T-cell (primary cell): ENCODE measurements at regions of chr5 and their contacts with region 1.

Region 1: GRCh38 chr5:67085616-67086015 is 111.0 kb downstream of the CD180 start:
- DNase-seq: no peak
- ATAC-seq: no peak
- H3K4me3 ChIP-seq: no peak overlapping the region
- H3K4me3 Mint-ChIP-seq: no peak overlapping the region
- H3K27ac ChIP-seq: no peak overlapping the region
- H3K27ac Mint-ChIP-seq: no peak overlapping the region
- H3K4me1 ChIP-seq: no peaks in the 10 kb centered on the region
- H3K4me1 Mint-ChIP-seq: peaks cover 0 to 6% (median 5%) of the 10 kb centered on the region in 3 donors
- H3K27me3 ChIP-seq: no peaks in the 10 kb centered on the region
- H3K27me3 Mint-ChIP-seq: no peaks in the 10 kb centered on the region

Region 2: DNA sequence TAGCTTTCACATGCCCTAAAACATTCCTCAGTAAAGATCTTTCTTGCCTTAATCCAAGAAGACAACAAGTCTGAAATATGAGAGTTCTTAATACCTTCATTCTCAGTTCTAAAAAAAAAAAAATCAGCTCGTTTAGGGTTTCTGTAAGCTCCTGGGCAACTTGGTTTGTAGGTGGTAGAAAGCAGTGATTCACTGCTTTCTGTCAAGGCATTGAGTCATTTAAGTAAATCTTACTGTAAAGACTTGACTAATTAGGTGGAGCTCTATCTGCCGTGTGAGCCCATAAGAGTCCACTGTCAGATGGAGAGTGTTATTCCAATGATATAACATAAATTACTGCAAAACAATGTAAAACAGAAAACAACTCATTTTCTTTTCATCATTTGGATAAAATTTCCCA is 545.5 kb before region 1 on chr5:
- CTCF ChIA-PET with region 1: no interaction called
- POLR2A ChIA-PET with region 1: no interaction called
- DNase-seq: no peak
- ATAC-seq: no peak
- H3K4me3 ChIP-seq: no peak overlapping the region
- H3K4me3 Mint-ChIP-seq: no peak overlapping the region
- H3K27ac ChIP-seq: no peak overlapping the region
- H3K27ac Mint-ChIP-seq: no peak overlapping the region
- H3K4me1 ChIP-seq: no peaks in the 10 kb centered on the region
- H3K4me1 Mint-ChIP-seq: no peaks in the 10 kb centered on the region
- H3K27me3 ChIP-seq: no peaks in the 10 kb centered on the region
- H3K27me3 Mint-ChIP-seq: peaks cover 3 to 5% of the 10 kb centered on the region in 2 donors

Region 3: GRCh38 chr5:66653325-66653724 is 432.3 kb before region 1 on chr5:
- CTCF ChIA-PET with region 1: no interaction called
- POLR2A ChIA-PET with region 1: no interaction called
- DNase-seq: no peak
- ATAC-seq: no peak
- H3K4me3 ChIP-seq: no peak overlapping the region
- H3K4me3 Mint-ChIP-seq: no peak overlapping the region
- H3K27ac ChIP-seq: no peak overlapping the region
- H3K27ac Mint-ChIP-seq: no peak overlapping the region
- H3K4me1 ChIP-seq: no peaks in the 10 kb centered on the region
- H3K4me1 Mint-ChIP-seq: no peaks in the 10 kb centered on the region
- H3K27me3 ChIP-seq: no peaks in the 10 kb centered on the region
- H3K27me3 Mint-ChIP-seq: peaks cover 2 to 4% of the 10 kb centered on the region in 2 donors

Region 4: DNA sequence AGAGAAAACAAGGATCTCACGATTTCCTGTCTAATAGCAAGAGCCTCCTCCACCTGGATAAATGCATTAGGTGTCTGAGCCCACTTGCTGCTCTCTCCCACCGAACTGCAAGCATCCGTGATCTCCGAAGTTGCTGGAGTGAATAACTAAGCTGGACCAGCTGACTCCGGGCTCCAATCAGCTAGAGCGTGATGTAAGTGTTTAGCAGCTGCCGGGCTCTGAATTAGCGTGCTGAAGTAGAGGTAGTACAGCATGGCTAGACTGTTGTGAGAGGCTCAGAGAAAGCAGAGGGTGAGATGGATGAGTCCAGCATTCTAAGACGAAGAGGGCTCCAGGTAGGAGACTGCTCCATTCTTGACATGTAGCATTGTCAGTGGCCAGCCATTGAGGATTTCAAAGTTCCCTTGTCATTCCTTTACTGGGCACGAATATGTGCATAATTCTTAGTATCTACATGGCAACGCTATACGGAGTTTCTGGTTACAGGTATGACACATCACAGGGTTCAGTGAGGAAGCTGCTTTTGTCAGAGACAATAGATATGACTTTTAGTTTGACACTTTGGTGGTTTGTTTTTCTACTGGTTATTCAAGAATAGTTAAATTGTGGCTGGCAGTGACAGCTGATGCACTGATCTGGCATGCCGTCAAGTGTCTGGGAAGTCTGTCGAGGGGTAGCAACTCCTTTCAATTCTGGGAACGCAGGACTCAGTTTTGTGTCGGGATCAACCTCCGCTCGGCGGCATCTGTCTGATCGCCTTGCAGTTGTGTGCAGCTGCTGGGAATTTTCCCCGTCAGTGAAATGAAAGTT is 256.9 kb before region 1 on chr5:
- CTCF ChIA-PET with region 1: no interaction called
- POLR2A ChIA-PET with region 1: no interaction called
- DNase-seq: peak; percentile 15 to 72 (median 47)
- ATAC-seq: peak; percentile 89 to 94 (median 92)
- H3K4me3 ChIP-seq: peak overlapping the region; percentile 43 to 66
- H3K4me3 Mint-ChIP-seq: peak overlapping the region; percentile 75 to 78 (median 78)
- H3K27ac ChIP-seq: peak overlapping the region; percentile 43
- H3K27ac Mint-ChIP-seq: peak overlapping the region; percentile 62 to 78
- H3K4me1 ChIP-seq: peaks cover 10 to 11% of the 10 kb centered on the region in 2 experiments
- H3K4me1 Mint-ChIP-seq: peaks cover 22 to 32% (median 32%) of the 10 kb centered on the region in 3 donors
- H3K27me3 ChIP-seq: peaks cover 5 to 8% of the 10 kb centered on the region in 2 experiments
- H3K27me3 Mint-ChIP-seq: peaks cover 13 to 25% of the 10 kb centered on the region in 2 donors

Region 5: DNA sequence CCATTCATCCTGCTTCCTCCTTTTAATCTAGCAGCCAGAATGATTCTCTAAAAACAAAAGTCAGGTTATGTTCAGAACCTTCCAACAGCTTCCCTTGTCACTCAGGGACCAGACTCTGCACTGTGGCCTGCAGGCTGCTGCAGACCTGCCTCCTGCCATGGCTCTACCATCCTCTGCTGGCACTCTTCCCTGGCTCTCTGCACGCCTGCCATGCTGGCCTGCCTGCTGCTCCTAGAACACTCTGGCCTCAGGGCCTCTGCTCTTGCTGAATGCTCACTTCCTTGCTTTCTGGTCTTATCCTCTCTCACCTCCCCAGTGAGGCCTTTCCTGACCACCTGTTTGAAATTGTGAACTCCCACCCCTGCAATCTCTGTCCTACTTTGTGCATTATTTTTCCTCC is 38.5 kb before region 1 on chr5:
- CTCF ChIA-PET with region 1: no interaction called
- POLR2A ChIA-PET with region 1: interaction called in 1 of 2 experiments, 10 read pairs
- DNase-seq: no peak
- ATAC-seq: no peak
- H3K4me3 ChIP-seq: no peak overlapping the region
- H3K4me3 Mint-ChIP-seq: no peak overlapping the region
- H3K27ac ChIP-seq: no peak overlapping the region
- H3K27ac Mint-ChIP-seq: no peak overlapping the region
- H3K4me1 ChIP-seq: peaks cover 0 to 4% of the 10 kb centered on the region in 2 experiments
- H3K4me1 Mint-ChIP-seq: peaks cover 19 to 37% (median 19%) of the 10 kb centered on the region in 3 donors
- H3K27me3 ChIP-seq: no peaks in the 10 kb centered on the region
- H3K27me3 Mint-ChIP-seq: no peaks in the 10 kb centered on the region

Region 6: GRCh38 chr5:67066815-67067214 is 18.8 kb before region 1 on chr5:
- CTCF ChIA-PET with region 1: no interaction called
- POLR2A ChIA-PET with region 1: no interaction called
- DNase-seq: no peak
- ATAC-seq: no peak
- H3K4me3 ChIP-seq: no peak overlapping the region
- H3K4me3 Mint-ChIP-seq: no peak overlapping the region
- H3K27ac ChIP-seq: no peak overlapping the region
- H3K27ac Mint-ChIP-seq: no peak overlapping the region
- H3K4me1 ChIP-seq: peaks cover 0 to 7% of the 10 kb centered on the region in 2 experiments
- H3K4me1 Mint-ChIP-seq: peaks cover 15 to 20% (median 20%) of the 10 kb centered on the region in 3 donors
- H3K27me3 ChIP-seq: no peaks in the 10 kb centered on the region
- H3K27me3 Mint-ChIP-seq: no peaks in the 10 kb centered on the region

Region 7: DNA sequence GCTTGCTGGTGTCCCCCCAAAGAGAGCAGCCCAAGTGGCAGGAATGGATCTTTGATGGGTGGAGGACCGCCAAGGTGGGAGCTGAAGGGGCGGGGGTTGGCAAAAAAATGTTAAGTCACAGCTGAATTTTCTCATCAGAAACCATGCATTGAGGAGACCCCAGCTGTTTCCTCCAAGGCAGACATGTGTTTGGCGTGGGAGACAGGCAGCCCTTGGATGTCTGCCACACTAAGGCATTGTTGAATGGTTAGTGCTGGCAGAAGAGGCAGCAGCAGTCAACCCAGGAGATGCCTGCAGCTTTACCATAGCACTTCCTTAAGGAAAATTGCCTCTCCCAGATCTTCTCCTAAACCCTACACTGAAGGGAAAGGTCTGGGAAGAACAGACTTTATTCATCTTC is 505.9 kb after region 1 on chr5:
- CTCF ChIA-PET with region 1: no interaction called
- POLR2A ChIA-PET with region 1: interaction called in 1 of 2 experiments, 13 read pairs
- DNase-seq: no peak
- ATAC-seq: no peak
- H3K4me3 ChIP-seq: no peak overlapping the region
- H3K4me3 Mint-ChIP-seq: no peak overlapping the region
- H3K27ac ChIP-seq: no peak overlapping the region
- H3K27ac Mint-ChIP-seq: no peak overlapping the region
- H3K4me1 ChIP-seq: no peaks in the 10 kb centered on the region
- H3K4me1 Mint-ChIP-seq: no peaks in the 10 kb centered on the region
- H3K27me3 ChIP-seq: no peaks in the 10 kb centered on the region
- H3K27me3 Mint-ChIP-seq: no peaks in the 10 kb centered on the region